CD4-positive, alpha-beta memory T cell (primary cell): ENCODE measurements at regions of chr17 and their contacts with region 1.

Region 1: GRCh38 chr17:64506576-64507477 is at the start of gene CEP95:
- DNase-seq: peak in 3 of 5 donors; percentile 92 to 98 (median 97)
- H3K4me3 ChIP-seq: peak within 1 kb of the TSS; percentile 89 to 97
- H3K4me3 Mint-ChIP-seq: peak within 1 kb of the TSS; percentile 95 to 100 (median 100)
- H3K27ac ChIP-seq: peak within 1 kb of the TSS; percentile 98
- H3K27ac Mint-ChIP-seq: peak within 1 kb of the TSS; percentile 98 to 100 (median 100)
- H3K4me1 ChIP-seq: peaks cover 49% of the 10 kb centered on the region
- H3K4me1 Mint-ChIP-seq: peaks cover 43 to 75% (median 56%) of the 10 kb centered on the region in 4 donors
- H3K27me3 ChIP-seq: no peaks in the 10 kb centered on the region
- H3K27me3 Mint-ChIP-seq: peaks cover 0 to 4% of the 10 kb centered on the region in 2 donors
- total RNA-seq, gene CEP95: 105 to 108 TPM

Region 2: GRCh38 chr17:63842540-63843386 is 664.1 kb before region 1 on chr17 and contains the start of gene SMARCD2:
- CTCF ChIA-PET with region 1: no interaction called
- POLR2A ChIA-PET with region 1: interaction called, 10 read pairs
- intact Hi-C with region 1: loop called (anchors 10 kb)
- DNase-seq: peak; percentile 97 to 98 (median 98)
- H3K4me3 ChIP-seq: peak within 1 kb of the TSS; percentile 58 to 72
- H3K4me3 Mint-ChIP-seq: peak within 1 kb of the TSS; percentile 86 to 97 (median 94)
- H3K27ac ChIP-seq: peak within 1 kb of the TSS; percentile 84
- H3K27ac Mint-ChIP-seq: peak within 1 kb of the TSS; percentile 87 to 96 (median 95)
- H3K4me1 ChIP-seq: peaks cover 48% of the 10 kb centered on the region
- H3K4me1 Mint-ChIP-seq: peaks cover 17 to 57% (median 35%) of the 10 kb centered on the region in 4 donors
- H3K27me3 ChIP-seq: no peaks in the 10 kb centered on the region
- H3K27me3 Mint-ChIP-seq: no peaks in the 10 kb centered on the region
- total RNA-seq, gene SMARCD2: 113 to 114 TPM

Region 3: DNA sequence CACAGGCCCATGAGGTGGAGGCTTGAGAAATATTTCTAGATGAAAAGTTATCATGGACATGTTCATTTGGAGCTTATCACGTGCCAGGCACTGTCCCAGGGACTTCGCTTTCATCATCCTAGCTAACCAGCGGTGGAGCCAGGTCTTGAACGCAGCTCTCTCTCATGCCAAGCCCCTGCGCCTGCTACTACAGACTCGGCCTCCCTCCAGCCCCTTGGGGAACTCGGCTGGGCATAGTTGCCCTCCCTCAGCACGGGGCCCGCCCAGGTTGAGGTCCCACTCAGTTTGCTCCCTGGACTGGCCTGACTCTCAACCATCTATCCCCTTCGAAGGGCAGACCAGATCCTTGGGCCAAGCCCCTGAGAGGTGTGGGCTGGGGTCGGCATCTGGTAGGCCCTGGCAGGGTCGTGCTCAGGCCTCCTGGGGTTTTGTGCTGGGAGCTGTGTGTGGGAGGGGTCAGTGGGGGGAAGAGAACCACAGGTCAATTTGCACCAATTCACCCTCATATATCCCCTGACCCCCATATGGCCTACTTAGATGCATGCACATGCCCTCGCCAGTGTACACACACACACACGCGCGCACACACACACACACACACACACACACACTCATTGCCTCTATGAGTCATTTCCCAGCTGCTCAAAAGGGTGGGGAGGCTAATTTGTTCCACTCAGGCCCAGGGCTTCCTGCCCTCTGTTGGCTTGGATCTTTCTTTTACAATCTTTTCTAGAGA is 522.0 kb before region 1 on chr17:
- CTCF ChIA-PET with region 1: no interaction called
- POLR2A ChIA-PET with region 1: no interaction called
- intact Hi-C with region 1: no loop called
- DNase-seq: peak; percentile 46 to 86 (median 70)
- H3K4me3 ChIP-seq: no peak overlapping the region
- H3K4me3 Mint-ChIP-seq: peak overlapping the region in 5 of 8 donors; percentile 10 to 86 (median 47)
- H3K27ac ChIP-seq: no peak overlapping the region
- H3K27ac Mint-ChIP-seq: peak overlapping the region; percentile 61 to 98 (median 87)
- H3K4me1 ChIP-seq: peaks cover 18% of the 10 kb centered on the region
- H3K4me1 Mint-ChIP-seq: peaks cover 16 to 29% (median 19%) of the 10 kb centered on the region in 4 donors
- H3K27me3 ChIP-seq: no peaks in the 10 kb centered on the region
- H3K27me3 Mint-ChIP-seq: peaks cover 0 to 2% of the 10 kb centered on the region in 2 donors

Region 4: DNA sequence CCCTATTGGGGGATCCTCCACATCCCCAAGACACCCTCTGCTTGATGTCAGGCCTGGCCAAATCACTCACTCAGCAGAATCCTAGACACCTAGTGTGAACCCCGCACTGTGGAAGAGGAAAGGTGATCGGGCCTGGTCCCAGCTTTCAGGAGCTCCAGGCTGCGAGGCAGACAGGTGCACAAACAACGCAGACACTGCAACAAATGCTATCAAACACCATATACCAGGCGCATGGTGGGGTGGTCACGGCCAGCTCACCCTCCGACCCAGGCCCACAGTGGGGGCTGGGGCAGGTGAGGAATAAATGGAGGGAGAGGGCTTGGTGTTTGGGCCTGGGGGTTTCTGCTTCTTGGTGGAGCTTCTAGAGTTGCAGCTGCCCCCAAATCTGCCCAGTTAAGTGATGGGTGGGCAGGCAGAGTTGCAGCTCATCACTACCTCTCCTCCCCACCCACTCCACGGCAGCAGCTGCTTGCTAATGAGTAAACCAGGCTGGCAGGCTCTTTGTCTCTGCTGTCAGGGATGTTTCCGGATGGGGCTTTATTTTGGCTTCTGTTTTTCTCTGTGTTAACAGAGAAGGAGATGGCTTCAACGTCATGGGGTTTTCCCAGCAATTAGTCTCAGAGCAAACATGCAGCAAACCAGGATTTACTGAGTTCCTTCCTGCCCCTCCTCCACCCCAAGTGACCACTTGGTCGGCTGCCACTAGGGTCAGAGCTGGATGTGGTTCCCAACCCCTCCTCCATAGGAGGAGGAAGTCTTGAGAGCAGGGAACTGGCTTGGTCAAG is 162.8 kb before region 1 on chr17:
- CTCF ChIA-PET with region 1: no interaction called
- POLR2A ChIA-PET with region 1: interaction called, 29 read pairs
- intact Hi-C with region 1: no loop called
- DNase-seq: peak; percentile 17 to 66 (median 21)
- H3K4me3 ChIP-seq: no peak overlapping the region
- H3K4me3 Mint-ChIP-seq: peak overlapping the region in 3 of 8 donors; percentile 15 to 55 (median 33)
- H3K27ac ChIP-seq: no peak overlapping the region
- H3K27ac Mint-ChIP-seq: peak overlapping the region; percentile 35 to 69 (median 64)
- H3K4me1 ChIP-seq: peaks cover 39% of the 10 kb centered on the region
- H3K4me1 Mint-ChIP-seq: peaks cover 15 to 32% (median 24%) of the 10 kb centered on the region in 4 donors
- H3K27me3 ChIP-seq: no peaks in the 10 kb centered on the region
- H3K27me3 Mint-ChIP-seq: no peaks in the 10 kb centered on the region

Region 5: DNA sequence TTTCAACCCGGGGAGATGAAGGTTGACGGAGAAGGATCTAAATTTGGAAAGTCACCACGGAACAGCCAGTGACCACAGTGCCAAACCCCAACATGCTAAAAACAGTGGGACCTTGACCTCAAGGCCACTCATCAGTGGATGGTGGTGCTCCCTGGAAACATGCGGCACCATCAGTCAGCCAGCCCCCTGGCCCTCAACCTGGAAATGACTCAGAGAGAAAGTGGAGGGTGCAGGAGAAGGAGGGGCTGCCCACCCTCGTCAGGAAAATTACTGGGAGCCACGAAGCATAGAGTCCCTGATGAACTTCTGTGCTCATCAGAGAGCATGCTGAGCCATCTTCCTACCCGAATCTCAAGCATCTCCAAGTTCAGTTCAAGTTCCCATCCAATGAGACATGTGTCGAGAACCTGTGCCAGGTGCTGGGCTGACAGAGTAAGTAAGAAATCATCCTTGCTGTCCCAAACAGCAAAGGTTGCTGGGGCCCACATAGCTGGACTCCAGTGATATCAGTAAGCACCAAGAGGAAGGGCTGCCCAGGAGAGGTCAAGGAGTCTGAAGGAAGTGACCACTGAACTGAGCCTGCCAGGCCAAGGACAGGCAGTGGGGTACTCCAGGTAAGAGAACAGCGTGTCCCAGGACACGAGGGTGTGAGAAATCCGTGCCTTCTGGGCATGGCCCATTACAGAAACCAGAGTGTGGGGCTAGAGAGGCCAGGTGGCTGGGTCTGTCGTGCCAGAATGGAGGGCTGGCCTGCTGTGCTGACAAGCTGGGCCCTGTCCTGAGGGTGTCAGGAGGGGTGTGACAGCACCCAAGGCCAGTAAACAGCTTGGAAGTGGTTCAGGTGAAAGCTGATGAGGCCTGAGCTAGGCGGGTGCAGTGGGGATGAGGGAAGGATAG is 121.4 kb before region 1 on chr17:
- CTCF ChIA-PET with region 1: no interaction called
- POLR2A ChIA-PET with region 1: no interaction called
- intact Hi-C with region 1: no loop called
- DNase-seq: no peak
- H3K4me3 ChIP-seq: no peak overlapping the region
- H3K4me3 Mint-ChIP-seq: no peak overlapping the region
- H3K27ac ChIP-seq: no peak overlapping the region
- H3K27ac Mint-ChIP-seq: peak overlapping the region in 3 of 7 donors; percentile 18 to 54 (median 41)
- H3K4me1 ChIP-seq: no peaks in the 10 kb centered on the region
- H3K4me1 Mint-ChIP-seq: peaks cover 0 to 10% (median 3%) of the 10 kb centered on the region in 4 donors
- H3K27me3 ChIP-seq: no peaks in the 10 kb centered on the region
- H3K27me3 Mint-ChIP-seq: peaks cover 2% of the 10 kb centered on the region in 2 donors

Region 6: DNA sequence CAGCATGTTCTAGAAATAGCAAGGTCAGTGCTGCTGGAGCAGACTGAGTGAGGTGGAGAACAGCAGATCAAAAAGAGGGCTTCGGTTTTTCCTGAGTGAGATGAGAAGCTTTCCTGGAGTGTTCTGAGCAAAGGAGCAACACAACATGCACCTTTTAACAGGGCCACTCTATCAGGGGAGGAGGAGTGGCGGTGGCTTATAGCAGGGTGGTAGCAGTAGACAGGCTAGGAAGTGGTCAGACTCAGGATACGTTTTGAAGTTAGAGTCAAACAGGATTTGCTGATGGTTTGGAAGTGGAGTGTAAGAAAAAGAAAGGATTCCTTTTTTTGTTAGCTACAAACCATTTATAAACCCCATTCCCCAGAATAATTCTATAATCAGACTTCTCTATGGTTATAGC is 22.4 kb before region 1 on chr17:
- CTCF ChIA-PET with region 1: no interaction called
- POLR2A ChIA-PET with region 1: interaction called, 110 read pairs
- intact Hi-C with region 1: no loop called
- DNase-seq: no peak
- H3K4me3 ChIP-seq: no peak overlapping the region
- H3K4me3 Mint-ChIP-seq: no peak overlapping the region
- H3K27ac ChIP-seq: no peak overlapping the region
- H3K27ac Mint-ChIP-seq: peak overlapping the region in 5 of 7 donors; percentile 52 to 88 (median 74)
- H3K4me1 ChIP-seq: peaks cover 12% of the 10 kb centered on the region
- H3K4me1 Mint-ChIP-seq: peaks cover 11 to 14% (median 13%) of the 10 kb centered on the region in 4 donors
- H3K27me3 ChIP-seq: no peaks in the 10 kb centered on the region
- H3K27me3 Mint-ChIP-seq: no peaks in the 10 kb centered on the region

Region 7: GRCh38 chr17:64648234-64648633 is 141.4 kb after region 1 on chr17:
- CTCF ChIA-PET with region 1: interaction called, 3 read pairs
- POLR2A ChIA-PET with region 1: interaction called, 4 read pairs
- intact Hi-C with region 1: loop called (anchors 2 kb)
- DNase-seq: no peak
- H3K4me3 ChIP-seq: no peak overlapping the region
- H3K4me3 Mint-ChIP-seq: no peak overlapping the region
- H3K27ac ChIP-seq: no peak overlapping the region
- H3K27ac Mint-ChIP-seq: peak overlapping the region in 1 of 7 donors; percentile 77
- H3K4me1 ChIP-seq: peaks cover 12% of the 10 kb centered on the region
- H3K4me1 Mint-ChIP-seq: peaks cover 12 to 38% (median 27%) of the 10 kb centered on the region in 4 donors
- H3K27me3 ChIP-seq: no peaks in the 10 kb centered on the region
- H3K27me3 Mint-ChIP-seq: no peaks in the 10 kb centered on the region

Region 8: DNA sequence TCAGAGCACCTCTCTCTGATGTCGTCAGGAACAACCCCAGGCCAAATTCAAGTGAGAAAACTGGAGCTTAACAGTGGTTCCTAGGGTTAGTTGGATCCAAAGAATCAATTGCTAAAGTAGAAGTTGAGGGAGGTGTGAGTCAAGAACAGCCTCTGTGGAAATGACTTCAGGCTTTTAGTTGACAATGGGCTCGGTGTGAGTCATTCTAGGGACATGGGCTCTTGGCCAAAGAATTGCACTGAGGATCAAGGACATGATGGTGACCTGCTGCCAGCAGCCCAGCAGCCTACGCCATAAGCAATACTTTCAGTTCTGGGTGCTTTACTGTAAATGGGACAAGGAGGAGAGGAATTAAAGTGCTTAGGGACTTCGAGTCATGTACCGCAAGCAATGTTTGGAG is 187.4 kb after region 1 on chr17:
- CTCF ChIA-PET with region 1: no interaction called
- POLR2A ChIA-PET with region 1: no interaction called
- intact Hi-C with region 1: no loop called
- DNase-seq: no peak
- H3K4me3 ChIP-seq: no peak overlapping the region
- H3K4me3 Mint-ChIP-seq: no peak overlapping the region
- H3K27ac ChIP-seq: no peak overlapping the region
- H3K27ac Mint-ChIP-seq: no peak overlapping the region
- H3K4me1 ChIP-seq: no peaks in the 10 kb centered on the region
- H3K4me1 Mint-ChIP-seq: no peaks in the 10 kb centered on the region
- H3K27me3 ChIP-seq: no peaks in the 10 kb centered on the region
- H3K27me3 Mint-ChIP-seq: no peaks in the 10 kb centered on the region

Region 9: GRCh38 chr17:64975329-64976087 is 468.7 kb after region 1 on chr17:
- CTCF ChIA-PET with region 1: no interaction called
- POLR2A ChIA-PET with region 1: interaction called, 16 read pairs
- intact Hi-C with region 1: no loop called
- DNase-seq: peak; percentile 97 to 99 (median 98)
- H3K4me3 ChIP-seq: peak overlapping the region; percentile 29 to 83
- H3K4me3 Mint-ChIP-seq: peak overlapping the region; percentile 91 to 99 (median 94)
- H3K27ac ChIP-seq: peak overlapping the region; percentile 93
- H3K27ac Mint-ChIP-seq: peak overlapping the region; percentile 98 to 100 (median 99)
- H3K4me1 ChIP-seq: peaks cover 38% of the 10 kb centered on the region
- H3K4me1 Mint-ChIP-seq: peaks cover 28 to 65% (median 39%) of the 10 kb centered on the region in 4 donors
- H3K27me3 ChIP-seq: no peaks in the 10 kb centered on the region
- H3K27me3 Mint-ChIP-seq: no peaks in the 10 kb centered on the region